Right ventricle myocardium inferior (tissue), 1 donor: ENCODE measurements at regions of chr14 and their contacts with region 1.

Region 1: DNA sequence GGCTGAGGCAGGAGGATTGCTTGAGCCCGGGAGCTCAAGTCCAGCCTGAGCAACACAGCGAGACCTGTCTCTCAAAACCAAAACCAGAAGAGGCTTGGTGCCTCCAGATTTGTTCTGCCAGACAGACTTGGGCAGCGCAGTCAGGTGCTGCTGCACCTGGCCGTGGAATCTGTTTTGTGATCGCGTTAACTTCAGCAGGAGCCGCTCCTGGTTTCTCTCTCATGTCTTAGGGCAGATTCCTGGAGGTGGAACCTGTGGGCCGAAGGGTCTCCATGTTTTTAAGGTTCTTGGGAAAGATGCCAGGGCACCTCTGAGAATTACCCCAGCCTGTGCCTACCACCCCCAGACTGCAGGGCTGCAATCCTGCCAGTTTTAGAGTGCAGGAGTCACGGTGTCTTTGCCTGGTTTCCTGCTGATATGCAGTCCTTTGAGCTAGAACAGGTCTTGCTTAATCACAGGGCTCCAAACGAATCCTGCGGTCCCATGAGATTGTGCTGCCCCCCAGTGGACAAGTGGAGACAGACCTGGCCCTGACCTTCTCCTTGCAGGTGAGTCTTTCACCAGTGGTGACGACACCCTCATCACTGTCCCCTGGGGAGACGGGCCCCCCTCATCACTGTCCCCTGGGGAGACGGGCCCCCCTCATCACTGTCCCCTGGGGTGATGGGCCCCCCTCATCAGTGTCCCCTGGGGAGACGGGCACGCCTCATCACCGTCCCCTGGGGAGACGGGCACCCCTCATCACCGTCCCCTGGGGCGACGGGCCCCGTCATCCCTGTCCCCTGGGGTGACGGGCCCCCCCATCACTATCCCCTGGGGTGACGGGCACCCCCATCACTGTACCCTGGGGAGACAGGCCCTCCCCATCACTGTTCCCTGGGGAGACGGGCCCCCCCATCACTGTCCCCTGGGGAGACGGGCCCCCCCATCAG is 37.6 kb downstream of the PACS2 start:
- DNase-seq: no peak
- ATAC-seq: peak; percentile 89

Region 2: DNA sequence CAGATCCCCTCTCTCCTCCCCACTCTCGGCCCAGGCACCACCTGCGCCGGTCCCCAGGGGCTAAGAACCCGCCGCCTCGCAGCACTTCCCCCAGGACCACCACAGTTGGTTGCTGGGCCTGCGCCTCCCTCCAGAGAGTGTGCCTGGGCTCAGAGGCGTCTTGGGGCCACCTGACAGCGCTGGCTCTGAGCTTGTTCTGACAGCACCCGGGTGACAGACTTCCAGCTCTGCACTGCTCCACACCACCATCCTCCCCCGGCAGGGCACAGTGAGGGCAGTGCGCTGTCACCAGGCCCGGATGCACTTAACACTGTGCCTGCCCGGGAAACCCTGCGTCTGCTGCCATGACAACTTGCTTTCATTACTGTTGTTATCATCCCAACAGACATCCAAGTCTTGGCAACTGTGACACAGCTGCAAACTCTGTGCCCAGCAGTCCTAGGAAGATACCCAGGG is 58.0 kb before region 1 on chr14:
- intact Hi-C with region 1: loop called (anchors 5 kb)
- DNase-seq: peak; percentile 82
- ATAC-seq: peak; percentile 98

Region 3: GRCh38 chr14:105314287-105315200 is 37.6 kb before region 1 on chr14 and contains the start of gene PACS2:
- intact Hi-C with region 1: no loop called
- DNase-seq: peak; percentile 91
- ATAC-seq: peak; percentile 88
- total RNA-seq, gene PACS2: 69.1 TPM